ENCODE measurements at regions of chr7 and their contacts with region 1.

Region 1: DNA sequence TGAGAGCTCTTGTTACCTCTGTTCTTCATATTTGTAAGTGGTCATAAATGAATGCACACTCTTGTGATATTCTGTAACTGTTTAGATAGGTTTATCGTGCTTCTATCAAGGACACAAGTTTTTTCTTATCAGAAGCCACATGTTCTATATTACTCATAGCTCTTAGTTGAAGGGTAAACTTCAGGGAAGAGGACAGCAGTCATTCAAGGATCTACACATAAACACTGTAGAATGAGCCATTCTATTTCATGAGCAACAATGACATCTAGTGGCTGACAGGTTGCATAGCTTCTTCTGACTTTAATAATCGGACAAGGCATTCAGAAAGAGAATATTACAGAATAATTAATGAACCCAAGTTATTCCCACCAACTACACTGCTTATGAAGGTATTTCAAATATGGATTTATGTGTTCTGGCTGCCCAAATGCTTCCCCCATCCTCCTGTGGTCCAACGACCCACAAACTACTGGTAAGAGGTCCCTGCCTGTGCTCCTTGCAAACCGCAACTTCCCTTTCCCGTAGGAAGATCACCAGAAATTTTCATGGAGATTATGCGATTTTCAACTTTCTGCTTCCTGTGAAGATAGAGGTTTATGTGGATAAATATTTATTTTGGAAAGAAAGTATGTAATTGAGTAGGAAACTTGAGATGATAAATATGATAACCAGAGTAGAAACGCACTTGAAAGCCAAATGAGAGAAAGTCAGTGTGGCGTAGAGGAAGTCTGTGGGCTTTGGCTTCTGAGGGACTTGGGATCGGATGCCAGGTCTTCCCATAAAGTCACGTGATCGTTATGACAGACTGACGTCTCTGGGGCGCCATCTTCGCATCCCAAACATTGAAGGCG is 16.8 kb upstream of the ABCB5 start:
- DNase-seq: no peak
- ATAC-seq: peak; percentile 84
- H3K4me3 ChIP-seq: no peak overlapping the region
- H3K27ac ChIP-seq: no peak overlapping the region
- H3K4me1 ChIP-seq: no peaks in the 10 kb centered on the region
- H3K27me3 ChIP-seq: no peaks in the 10 kb centered on the region
- CTCF ChIP-seq: peak; percentile 51 to 93 (median 85)
- POLR2A ChIP-seq: no peak

Region 2: DNA sequence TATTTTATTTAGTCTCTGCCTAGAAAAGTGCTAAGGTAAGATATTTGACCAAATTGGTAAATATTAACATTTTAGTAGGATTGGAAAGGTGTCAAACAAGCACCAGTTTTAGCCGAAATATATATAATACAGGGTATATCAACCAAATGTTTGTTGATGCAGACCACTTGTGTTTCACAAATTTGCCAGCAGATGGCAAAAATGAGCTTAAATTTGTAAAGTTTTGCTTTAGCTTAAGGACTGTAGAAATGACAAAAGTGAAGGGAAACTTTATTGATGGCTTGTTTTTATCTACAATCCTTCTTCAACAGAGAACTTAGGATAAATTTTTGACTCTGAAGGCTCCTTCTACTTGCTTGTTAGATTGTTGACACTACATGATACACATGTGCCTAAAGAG is 885.0 kb before region 1 on chr7:
- intact Hi-C with region 1: loop called (anchors 10 kb)
- DNase-seq: peak; percentile 20 to 55 (median 38)
- ATAC-seq: no peak
- H3K4me3 ChIP-seq: no peak overlapping the region
- H3K27ac ChIP-seq: no peak overlapping the region
- H3K4me1 ChIP-seq: peaks cover 6% of the 10 kb centered on the region
- H3K27me3 ChIP-seq: no peaks in the 10 kb centered on the region
- CTCF ChIP-seq: peak in 6 of 7 experiments; percentile 30 to 57 (median 50)
- POLR2A ChIP-seq: no peak

Region 3: GRCh38 chr7:19747740-19748339 is 850.8 kb before region 1 on chr7:
- intact Hi-C with region 1: loop called (anchors 5 kb)
- DNase-seq: peak in 1 of 4 donors; percentile 17
- ATAC-seq: peak; percentile 60
- H3K4me3 ChIP-seq: no peak overlapping the region
- H3K27ac ChIP-seq: no peak overlapping the region
- H3K4me1 ChIP-seq: no peaks in the 10 kb centered on the region
- H3K27me3 ChIP-seq: no peaks in the 10 kb centered on the region
- CTCF ChIP-seq: peak; percentile 47 to 70 (median 66)
- POLR2A ChIP-seq: no peak